Heart left ventricle (tissue), 16 donors: ENCODE measurements at regions of chr9 and their contacts with region 1.

Region 1: GRCh38 chr9:107282753-107283625 is at the start of gene RAD23B:
- DNase-seq: peak; percentile 99 to 100 (median 99)
- ATAC-seq: peak; percentile 95 to 98 (median 97)
- H3K4me3 ChIP-seq: peak within 1 kb of the TSS; percentile 72 to 99 (median 90)
- H3K27ac ChIP-seq: peak within 1 kb of the TSS; percentile 97 to 100 (median 99)
- H3K4me1 ChIP-seq: peaks cover 0 to 43% (median 24%) of the 10 kb centered on the region in 12 donors
- H3K27me3 ChIP-seq: no peaks in the 10 kb centered on the region
- CTCF ChIP-seq: no peak
- POLR2A ChIP-seq: peak in 1 of 2 donors; percentile 86
- total RNA-seq, gene RAD23B: 84.4 to 144 (median 105) TPM

Region 2: DNA sequence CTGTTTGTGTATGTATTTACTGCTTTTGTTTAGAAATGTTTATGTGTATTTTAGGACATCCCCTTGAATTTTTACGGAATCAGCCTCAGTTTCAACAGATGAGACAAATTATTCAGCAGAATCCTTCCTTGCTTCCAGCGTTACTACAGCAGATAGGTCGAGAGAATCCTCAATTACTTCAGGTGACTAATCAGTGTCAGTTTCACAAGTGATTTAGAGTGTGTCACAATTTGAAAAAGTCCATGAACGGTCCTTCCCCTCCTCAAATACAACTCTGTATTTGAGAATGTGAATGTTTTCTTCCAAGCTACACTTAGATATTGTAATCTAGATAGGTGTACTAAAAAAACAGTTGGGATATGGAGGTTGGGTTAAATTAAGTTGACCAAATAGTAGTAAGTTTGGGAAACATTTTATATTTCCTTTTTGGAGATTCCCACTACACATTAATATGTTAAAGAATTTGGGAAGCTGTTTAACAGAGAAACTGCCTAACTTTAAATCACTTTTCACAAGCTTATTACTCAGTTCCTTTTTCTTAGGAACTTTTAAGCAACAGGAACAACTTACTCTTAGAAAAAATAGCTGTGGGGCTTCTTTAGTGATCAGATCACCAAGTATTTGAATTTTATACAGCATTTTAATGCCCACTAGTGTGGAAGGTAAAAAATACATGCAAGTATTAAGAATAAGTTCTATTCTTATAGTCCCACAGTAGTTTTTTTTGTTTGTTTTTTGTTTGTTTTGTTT is 41.0 kb after region 1 on chr9:
- intact Hi-C with region 1: loop called in 2 of 10 experiments (anchors 5 kb)
- DNase-seq: no peak
- ATAC-seq: no peak
- H3K4me3 ChIP-seq: no peak overlapping the region
- H3K27ac ChIP-seq: peak overlapping the region in 1 of 12 donors; percentile 27
- H3K4me1 ChIP-seq: peaks cover 0 to 24% (median 8%) of the 10 kb centered on the region in 12 donors
- H3K27me3 ChIP-seq: no peaks in the 10 kb centered on the region
- CTCF ChIP-seq: no peak
- POLR2A ChIP-seq: no peak